ENCODE measurements at regions of chr18 and their contacts with region 1.

Region 1: GRCh38 chr18:27599202-27599829 is 414.2 kb upstream of the CHST9 start:
- DNase-seq: peak; percentile 36
- H3K4me3 ChIP-seq: no peak overlapping the region
- H3K27ac ChIP-seq: no peak overlapping the region
- H3K4me1 ChIP-seq: no peaks in the 10 kb centered on the region
- H3K27me3 ChIP-seq: no peaks in the 10 kb centered on the region
- CTCF ChIP-seq: peak; percentile 62 to 82 (median 77)
- EP300 ChIP-seq: no peak
- POLR2A ChIP-seq: no peak

Region 2: DNA sequence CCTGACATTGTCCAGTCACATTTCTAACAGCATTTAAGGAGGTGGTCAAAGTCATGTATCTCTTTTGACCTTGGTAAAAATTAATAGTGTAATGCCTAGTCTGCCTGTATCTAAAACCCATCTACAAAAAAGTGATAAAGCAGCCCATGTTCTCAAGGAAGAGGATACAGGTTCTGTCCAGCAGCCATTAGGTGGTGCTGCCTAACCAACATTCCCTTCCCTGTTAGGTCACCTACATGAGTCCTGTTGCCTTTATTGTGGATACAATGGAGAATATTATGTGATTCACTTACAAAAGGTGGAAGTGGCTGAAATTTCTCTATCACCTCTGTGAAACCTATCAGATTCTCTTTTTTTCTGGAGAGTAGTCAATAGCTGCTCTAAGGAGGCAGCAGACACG is 786.3 kb before region 1 on chr18:
- in situ Hi-C with region 1: loop called in 1 of 4 experiments (anchors 25 kb)
- intact Hi-C with region 1: no loop called
- DNase-seq: peak; percentile 37
- H3K4me3 ChIP-seq: no peak overlapping the region
- H3K27ac ChIP-seq: no peak overlapping the region
- H3K4me1 ChIP-seq: no peaks in the 10 kb centered on the region
- H3K27me3 ChIP-seq: no peaks in the 10 kb centered on the region
- CTCF ChIP-seq: peak; percentile 23 to 45 (median 41)
- EP300 ChIP-seq: no peak
- POLR2A ChIP-seq: no peak

Region 3: DNA sequence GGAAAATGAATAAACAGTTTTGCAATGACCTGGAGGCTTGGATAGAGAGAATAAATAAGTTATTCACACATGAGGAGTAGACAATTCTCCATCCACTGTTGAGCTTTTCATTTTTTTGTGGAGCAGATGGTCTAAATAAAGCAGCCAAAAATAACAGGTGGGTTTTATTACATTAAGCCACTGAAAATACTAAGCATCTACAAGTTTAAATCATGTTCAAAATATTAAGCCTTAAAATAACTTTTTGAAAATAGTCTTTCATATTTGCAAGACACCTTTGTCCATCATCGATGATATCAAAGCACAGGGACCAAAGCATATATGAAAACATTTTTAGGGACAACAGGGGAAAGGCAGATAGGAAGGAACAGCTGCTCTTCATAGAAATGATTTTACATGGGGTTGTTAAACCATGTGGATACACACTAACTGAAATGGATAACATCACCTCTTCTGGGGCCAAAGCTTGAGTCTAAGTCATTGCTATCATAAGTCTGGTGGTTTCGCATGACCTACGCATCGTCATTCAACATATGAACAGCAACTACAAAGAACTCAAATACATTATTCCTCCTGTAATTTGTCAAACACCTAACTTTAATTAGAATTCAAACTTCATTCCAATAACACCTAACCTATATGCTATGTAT is 216.6 kb before region 1 on chr18:
- in situ Hi-C with region 1: no loop called
- intact Hi-C with region 1: loop called (anchors 10 kb)
- DNase-seq: no peak
- H3K4me3 ChIP-seq: no peak overlapping the region
- H3K27ac ChIP-seq: no peak overlapping the region
- H3K4me1 ChIP-seq: no peaks in the 10 kb centered on the region
- H3K27me3 ChIP-seq: no peaks in the 10 kb centered on the region
- CTCF ChIP-seq: no peak
- EP300 ChIP-seq: no peak
- POLR2A ChIP-seq: no peak